OCI-LY7 (cell line): ENCODE measurements at regions of chr5 and their contacts with region 1.

Region 1: GRCh38 chr5:158780656-158781237 is 319.0 kb downstream of the EBF1 start:
- DNase-seq: no peak
- H3K4me3 ChIP-seq: no peak overlapping the region
- H3K27ac ChIP-seq: no peak overlapping the region
- H3K4me1 ChIP-seq: peaks cover 58% of the 10 kb centered on the region
- CTCF ChIP-seq: no peak

Region 2: GRCh38 chr5:158802941-158803341 is 22.2 kb after region 1 on chr5:
- CTCF ChIA-PET with region 1: no interaction called
- POLR2A ChIA-PET with region 1: interaction called, 12 read pairs
- intact Hi-C with region 1: no loop called
- DNase-seq: no peak
- H3K4me3 ChIP-seq: no peak overlapping the region
- H3K27ac ChIP-seq: no peak overlapping the region
- H3K4me1 ChIP-seq: peaks cover 17% of the 10 kb centered on the region
- CTCF ChIP-seq: no peak